Stomach (tissue), 19 donors: ENCODE measurements at regions of chr6 and their contacts with region 1.

Region 1: GRCh38 chr6:149513915-149514314 is 29.1 kb upstream of the ZC3H12D start:
- DNase-seq: no peak
- H3K4me3 ChIP-seq: no peak overlapping the region
- H3K27ac ChIP-seq: no peak overlapping the region
- H3K4me1 ChIP-seq: peaks cover 0 to 15% (median 8%) of the 10 kb centered on the region in 4 donors
- H3K27me3 ChIP-seq: no peaks in the 10 kb centered on the region
- CTCF ChIP-seq: no peak
- EP300 ChIP-seq: no peak
- POLR2A ChIP-seq: no peak

Region 2: DNA sequence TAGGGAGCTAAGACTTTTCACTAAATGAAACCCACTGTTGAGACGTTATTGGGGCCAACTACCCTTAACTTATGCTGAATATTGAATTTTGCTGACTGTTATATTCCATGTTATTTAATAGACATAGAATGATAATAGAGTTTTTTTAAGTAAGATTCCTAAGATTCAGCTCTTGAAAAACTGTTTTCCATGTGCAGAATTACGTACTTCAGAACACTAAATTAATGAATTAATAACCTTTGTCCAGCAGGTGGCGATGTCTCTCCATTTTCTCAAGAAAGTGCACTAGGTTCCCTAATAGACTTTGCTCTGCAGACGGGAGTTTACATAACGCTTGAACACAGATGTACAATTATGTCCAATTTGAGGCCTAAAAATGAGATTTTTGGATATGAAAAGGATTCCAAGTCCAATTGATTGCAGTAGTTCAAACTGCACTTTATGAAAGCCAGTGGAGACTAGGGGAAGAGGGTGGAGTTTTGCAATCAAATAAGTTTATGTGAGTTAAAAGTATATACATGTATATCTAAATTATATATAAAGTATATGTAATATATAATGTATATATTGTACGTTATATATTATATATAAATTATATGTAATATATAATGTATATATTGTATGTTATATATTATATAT is 485.0 kb before region 1 on chr6:
- intact Hi-C with region 1: loop called (anchors 5 kb)
- DNase-seq: peak; percentile 58 to 95
- H3K4me3 ChIP-seq: no peak overlapping the region
- H3K27ac ChIP-seq: no peak overlapping the region
- H3K4me1 ChIP-seq: peaks cover 0 to 29% (median 10%) of the 10 kb centered on the region in 4 donors
- H3K27me3 ChIP-seq: no peaks in the 10 kb centered on the region
- CTCF ChIP-seq: peak in 4 of 7 experiments; percentile 67 to 80 (median 70)
- EP300 ChIP-seq: no peak
- POLR2A ChIP-seq: no peak

Region 3: DNA sequence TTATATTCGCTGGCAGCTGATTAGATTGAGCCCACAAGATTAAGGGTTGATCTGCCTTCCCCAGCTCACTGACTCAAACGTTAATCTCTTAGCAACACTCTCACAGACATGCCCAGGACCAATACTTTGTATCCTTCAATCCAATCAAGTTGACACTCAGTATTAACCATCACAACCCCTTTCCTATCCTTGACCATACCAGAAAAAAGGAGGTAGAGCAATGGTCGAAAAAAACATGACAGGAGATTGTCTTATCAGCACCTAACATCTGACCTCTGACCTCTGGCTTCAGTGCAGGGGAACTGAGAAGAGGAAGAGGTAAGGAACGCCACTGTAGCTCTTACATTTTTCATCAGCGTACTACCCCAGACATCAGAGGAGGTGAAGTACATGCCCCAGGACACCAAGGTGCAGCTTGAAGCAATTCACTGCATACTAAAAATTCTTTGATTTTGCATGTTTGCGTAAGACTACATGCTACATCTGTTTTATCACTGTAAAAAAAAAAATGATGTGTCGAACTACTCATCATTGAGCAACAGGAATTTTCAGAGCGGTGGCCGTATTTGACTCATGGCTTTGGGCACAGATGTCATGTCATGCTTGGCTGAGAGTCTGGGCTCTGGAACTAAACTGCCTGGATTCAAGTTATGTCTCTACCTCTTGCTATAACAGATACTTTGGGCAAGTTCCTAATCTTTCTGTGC is 384.4 kb before region 1 on chr6:
- intact Hi-C with region 1: no loop called
- DNase-seq: no peak
- H3K4me3 ChIP-seq: no peak overlapping the region
- H3K27ac ChIP-seq: peak overlapping the region in 1 of 5 donors; percentile 25
- H3K4me1 ChIP-seq: peaks cover 0 to 58% (median 13%) of the 10 kb centered on the region in 4 donors
- H3K27me3 ChIP-seq: no peaks in the 10 kb centered on the region
- CTCF ChIP-seq: no peak
- EP300 ChIP-seq: no peak
- POLR2A ChIP-seq: no peak

Region 4: GRCh38 chr6:149443411-149444181 is 70.3 kb before region 1 on chr6:
- intact Hi-C with region 1: loop called (anchors 10 kb)
- DNase-seq: peak in 1 of 2 donors; percentile 41
- H3K4me3 ChIP-seq: no peak overlapping the region
- H3K27ac ChIP-seq: no peak overlapping the region
- H3K4me1 ChIP-seq: peaks cover 0 to 7% (median 0%) of the 10 kb centered on the region in 4 donors
- H3K27me3 ChIP-seq: peaks cover 0 to 16% (median 0%) of the 10 kb centered on the region in 3 donors
- CTCF ChIP-seq: no peak
- EP300 ChIP-seq: no peak
- POLR2A ChIP-seq: no peak